ENCODE measurements at regions of chr2 and their contacts with region 1.

Region 1: DNA sequence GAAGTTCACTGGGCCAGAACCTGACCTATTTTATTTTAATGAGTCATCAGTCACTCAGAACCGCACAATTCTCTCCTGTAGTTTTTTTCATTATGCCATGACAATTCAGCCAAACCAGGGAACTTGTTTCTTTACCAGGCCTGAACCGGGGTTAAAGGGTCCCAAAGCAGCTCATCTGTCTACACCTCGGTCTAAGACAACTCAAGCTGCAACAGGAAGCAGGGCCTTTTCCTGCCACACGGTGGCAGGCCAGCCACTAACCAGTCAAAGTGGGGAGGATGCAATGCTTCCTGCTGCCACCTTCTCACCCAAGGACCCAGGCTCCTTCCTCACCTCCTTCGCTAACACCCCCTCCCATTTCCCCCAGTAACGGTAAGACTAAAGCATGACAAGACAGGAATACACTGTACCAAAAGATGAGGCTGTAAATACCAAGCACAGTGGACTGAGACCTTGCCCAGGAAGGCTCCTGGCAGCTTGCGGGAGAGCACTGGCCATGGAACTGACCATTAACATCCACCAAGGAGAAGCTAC is 56.7 kb upstream of the ACKR3 start:
- DNase-seq: peak; percentile 71
- CTCF ChIP-seq: peak; percentile 58

Region 2: DNA sequence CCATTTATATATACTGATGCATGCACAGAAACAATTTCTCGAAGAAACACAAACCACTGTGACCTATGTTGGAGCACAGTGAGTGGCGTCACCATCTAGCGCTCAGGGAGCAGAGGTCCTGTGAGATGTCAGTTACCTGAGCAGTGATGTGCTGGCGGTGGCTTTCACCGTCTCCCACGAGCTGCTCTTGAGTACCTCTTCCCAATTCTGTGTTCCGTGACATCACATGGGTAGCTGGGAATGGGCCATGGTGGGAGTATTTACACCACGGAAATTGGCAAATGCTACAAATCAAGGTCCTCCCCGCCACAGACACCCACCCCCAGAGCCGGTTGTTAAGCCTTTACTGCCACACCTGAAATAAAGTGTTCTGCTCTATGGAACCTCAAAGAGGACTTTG is 369.2 kb before region 1 on chr2:
- in situ Hi-C with region 1: no loop called
- DNase-seq: no peak
- CTCF ChIP-seq: no peak

Region 3: DNA sequence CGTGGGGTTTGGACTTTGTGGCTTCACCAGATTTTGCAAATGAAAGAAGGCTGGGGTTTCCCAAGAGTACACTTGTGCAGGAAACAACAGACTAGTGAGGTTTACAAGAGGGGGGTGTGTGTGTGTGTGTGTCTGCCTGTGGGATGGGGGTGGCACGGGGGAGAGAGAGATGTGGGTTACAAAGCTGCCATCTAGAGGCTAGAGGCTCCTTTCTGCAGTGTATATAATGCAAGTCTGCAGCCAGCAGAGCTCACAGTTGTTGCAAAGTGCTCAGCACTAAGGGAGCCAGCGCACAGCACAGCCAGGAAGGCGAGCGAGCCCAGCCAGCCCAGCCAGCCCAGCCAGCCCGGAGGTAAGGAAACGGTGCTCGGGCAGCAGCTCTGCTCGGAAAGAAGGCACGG is 56.6 kb after region 1 on chr2 and contains the start of gene ACKR3:
- in situ Hi-C with region 1: loop called (anchors 10 kb)
- DNase-seq: peak; percentile 89
- CTCF ChIP-seq: peak; percentile 53

Region 4: DNA sequence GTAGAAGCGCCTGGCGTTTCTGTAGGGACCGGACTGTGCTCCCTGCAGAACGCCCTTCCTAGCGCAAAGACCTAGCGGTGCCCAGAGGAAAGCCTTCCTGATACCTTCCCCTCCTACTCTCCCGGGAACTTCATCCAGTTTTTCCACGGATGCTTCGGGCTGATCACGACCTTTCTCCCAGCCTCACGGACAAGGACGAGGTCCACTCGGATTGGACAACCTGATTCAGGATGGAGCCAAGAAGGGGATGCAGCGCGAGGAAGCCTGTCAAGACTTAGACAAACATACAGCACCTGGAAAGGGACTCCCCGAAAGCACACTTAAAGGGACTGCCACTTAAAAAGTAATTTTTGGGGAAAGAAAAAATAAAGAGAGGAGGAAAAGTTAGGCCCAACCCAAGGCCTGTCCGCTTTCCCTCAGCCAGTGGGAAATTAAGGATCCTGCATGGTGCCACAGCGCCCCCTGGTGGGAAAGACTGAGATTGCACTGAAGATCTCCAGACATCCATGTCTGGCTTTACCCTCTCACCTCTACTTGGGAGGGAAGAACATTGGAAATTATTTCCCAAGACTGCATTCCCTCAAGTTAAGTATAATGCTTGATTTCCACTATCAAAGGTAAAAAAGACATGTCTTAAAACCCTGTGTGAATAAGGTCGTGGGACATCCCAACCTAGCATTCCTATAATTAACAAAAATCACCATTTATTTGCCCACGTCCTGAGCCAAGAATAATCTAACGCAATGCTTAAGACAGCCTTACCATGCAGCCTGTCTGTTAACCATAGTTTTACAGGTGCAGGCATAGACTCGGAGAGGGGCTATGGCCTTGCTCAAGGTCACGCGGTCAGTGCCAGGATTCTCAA is 559.3 kb after region 1 on chr2:
- in situ Hi-C with region 1: loop called (anchors 25 kb)
- DNase-seq: peak; percentile 61
- CTCF ChIP-seq: peak; percentile 92

Measured in GM13976 (cell line).